ENCODE measurements at regions of chr11 and their contacts with region 1.

Region 1: GRCh38 chr11:40306938-40307548 is 1152.4 kb downstream of the LRRC4C start:
- DNase-seq: no peak
- H3K4me3 ChIP-seq: no peak overlapping the region
- H3K27ac ChIP-seq: no peak overlapping the region
- H3K4me1 ChIP-seq: no peaks in the 10 kb centered on the region
- H3K27me3 ChIP-seq: no peaks in the 10 kb centered on the region
- CTCF ChIP-seq: peak; percentile 70

Region 2: GRCh38 chr11:40425168-40425567 is 118.1 kb after region 1 on chr11:
- CTCF ChIA-PET with region 1: no interaction called
- POLR2A ChIA-PET with region 1: no interaction called
- intact Hi-C with region 1: no loop called
- DNase-seq: no peak
- H3K4me3 ChIP-seq: no peak overlapping the region
- H3K27ac ChIP-seq: no peak overlapping the region
- H3K4me1 ChIP-seq: no peaks in the 10 kb centered on the region
- H3K27me3 ChIP-seq: no peaks in the 10 kb centered on the region
- CTCF ChIP-seq: no peak

Region 3: GRCh38 chr11:40722179-40722795 is 415.2 kb after region 1 on chr11:
- CTCF ChIA-PET with region 1: no interaction called
- POLR2A ChIA-PET with region 1: no interaction called
- intact Hi-C with region 1: loop called (anchors 10 kb)
- DNase-seq: peak in 1 of 2 experiments; percentile 4
- H3K4me3 ChIP-seq: no peak overlapping the region
- H3K27ac ChIP-seq: no peak overlapping the region
- H3K4me1 ChIP-seq: no peaks in the 10 kb centered on the region
- H3K27me3 ChIP-seq: peaks cover 3% of the 10 kb centered on the region; the same call in 1 of the 2 replicates
- CTCF ChIP-seq: peak; percentile 95

Region 4: GRCh38 chr11:41201156-41201555 is 894.1 kb after region 1 on chr11:
- CTCF ChIA-PET with region 1: no interaction called
- POLR2A ChIA-PET with region 1: interaction called, 11 read pairs
- intact Hi-C with region 1: loop called (anchors 5 kb)
- DNase-seq: peak; percentile 2 to 35
- H3K4me3 ChIP-seq: no peak overlapping the region
- H3K27ac ChIP-seq: no peak overlapping the region
- H3K4me1 ChIP-seq: no peaks in the 10 kb centered on the region
- H3K27me3 ChIP-seq: peaks cover 9% of the 10 kb centered on the region
- CTCF ChIP-seq: peak; percentile 63

Measured in PC-9 (cell line).